Activated naive CD4-positive, alpha-beta T cell treated with anti-CD3 and anti-CD28 coated beads, Interleukin-2, amount 10 ng/mL, durations not matched to agents 7 days and 5 days (primary cell): ENCODE measurements at regions of chr12 and their contacts with region 1.

Region 1: DNA sequence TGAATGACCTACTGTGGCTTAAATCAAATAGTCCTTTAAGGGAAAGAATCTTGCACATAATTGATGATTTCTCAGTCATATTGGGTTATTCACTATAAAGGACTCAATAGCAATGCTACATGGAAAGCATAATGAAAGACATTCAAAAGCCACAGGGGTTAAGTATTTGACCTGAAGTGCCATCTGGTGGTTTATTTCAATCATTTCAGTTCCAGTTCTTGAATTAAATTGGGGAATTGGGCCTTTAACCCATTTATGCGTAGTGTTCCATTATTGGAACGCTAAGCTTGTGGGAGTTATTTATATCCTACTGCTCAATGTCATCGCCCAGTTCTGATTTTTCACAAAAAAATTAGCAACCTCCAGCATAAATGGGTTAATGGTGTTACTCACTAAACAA is 41.3 kb upstream of the C12orf71 start:
- DNase-seq: no peak
- H3K4me3 Mint-ChIP-seq: no peak overlapping the region
- H3K27ac Mint-ChIP-seq: peak overlapping the region; percentile 24
- H3K4me1 Mint-ChIP-seq: no peaks in the 10 kb centered on the region
- H3K27me3 Mint-ChIP-seq: no peaks in the 10 kb centered on the region

Region 2: DNA sequence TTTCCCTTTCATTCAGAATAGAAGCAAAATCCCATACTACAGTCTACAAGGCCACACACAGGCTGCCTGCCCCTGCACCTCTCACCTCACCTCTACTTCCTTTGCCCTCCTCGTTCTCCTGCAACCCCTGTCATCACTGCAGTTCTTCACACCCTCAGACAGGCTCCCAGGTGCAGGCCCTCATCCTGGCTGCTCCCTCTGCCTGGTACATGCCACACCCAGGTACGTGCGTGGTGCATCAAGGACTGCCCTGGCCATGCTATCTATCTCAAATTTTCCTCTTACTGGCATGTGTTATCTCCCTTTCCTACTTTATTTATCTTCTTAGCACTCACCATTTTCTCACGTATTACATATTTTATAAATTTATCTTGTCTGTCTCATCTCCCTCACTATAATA is 133.8 kb before region 1 on chr12:
- CTCF ChIA-PET with region 1: no interaction called
- DNase-seq: no peak
- H3K4me3 Mint-ChIP-seq: no peak overlapping the region
- H3K27ac Mint-ChIP-seq: no peak overlapping the region
- H3K4me1 Mint-ChIP-seq: no peaks in the 10 kb centered on the region
- H3K27me3 Mint-ChIP-seq: no peaks in the 10 kb centered on the region

Region 3: GRCh38 chr12:27014085-27014858 is 109.4 kb before region 1 on chr12 and contains the start of gene TM7SF3:
- CTCF ChIA-PET with region 1: interaction called, 13 read pairs
- DNase-seq: peak; percentile 97
- H3K4me3 Mint-ChIP-seq: peak within 1 kb of the TSS; percentile 94
- H3K27ac Mint-ChIP-seq: peak within 1 kb of the TSS; percentile 98
- H3K4me1 Mint-ChIP-seq: peaks cover 58% of the 10 kb centered on the region
- H3K27me3 Mint-ChIP-seq: peaks cover 3% of the 10 kb centered on the region

Region 4: GRCh38 chr12:27158297-27158696 is 34.7 kb after region 1 on chr12:
- CTCF ChIA-PET with region 1: no interaction called
- DNase-seq: no peak
- H3K4me3 Mint-ChIP-seq: no peak overlapping the region
- H3K27ac Mint-ChIP-seq: no peak overlapping the region
- H3K4me1 Mint-ChIP-seq: no peaks in the 10 kb centered on the region
- H3K27me3 Mint-ChIP-seq: no peaks in the 10 kb centered on the region